H1 (cell line): ENCODE measurements at regions of chr2 and their contacts with region 1.

Region 1: GRCh38 chr2:227890495-227891079 is 19.2 kb downstream of the DAW1 start:
- DNase-seq: no peak
- H3K4me3 ChIP-seq: no peak overlapping the region
- H3K27ac ChIP-seq: no peak overlapping the region
- H3K4me1 ChIP-seq: no peaks in the 10 kb centered on the region
- H3K27me3 ChIP-seq: no peaks in the 10 kb centered on the region
- CTCF ChIP-seq: peak in 2 of 3 experiments; percentile 20 to 24; a peak in 2 of 4 replicates
- EP300 ChIP-seq: no peak
- POLR2A ChIP-seq: no peak
- RAD21 ChIP-seq: peak; percentile 56 to 61

Region 2: DNA sequence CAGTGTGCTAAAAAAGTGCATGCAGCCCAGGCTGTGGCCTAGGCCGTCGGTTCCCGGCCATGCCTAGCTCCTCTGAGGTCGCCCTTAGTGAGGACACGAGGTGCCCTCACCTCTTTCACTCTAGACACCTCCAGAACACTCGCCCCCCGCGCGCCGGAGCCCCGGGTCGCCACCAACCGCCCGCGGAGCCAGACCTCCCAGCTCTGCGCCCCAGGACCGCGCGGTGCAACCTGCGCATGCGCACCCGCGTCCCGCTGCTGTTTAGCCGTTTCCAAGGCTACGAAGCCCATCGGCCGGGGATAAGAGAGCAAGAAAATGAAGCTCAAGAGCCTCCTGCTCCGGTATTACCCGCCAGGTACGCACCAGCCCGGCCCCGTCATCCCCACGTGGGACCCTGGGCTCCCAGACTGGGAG is 19.2 kb before region 1 on chr2 and contains the start of gene DAW1:
- CTCF ChIA-PET with region 1: interaction called, 14 read pairs
- POLR2A ChIA-PET with region 1: no interaction called
- DNase-seq: peak in 1 of 2 experiments; percentile 90
- H3K4me3 ChIP-seq: peak within 1 kb of the TSS; percentile 42 to 59 (median 52)
- H3K27ac ChIP-seq: no peak within 1 kb of the TSS
- H3K4me1 ChIP-seq: peaks cover 0 to 5% (median 3%) of the 10 kb centered on the region in 4 experiments; a peak in 4 of 7 replicates
- H3K27me3 ChIP-seq: no peaks in the 10 kb centered on the region
- CTCF ChIP-seq: no peak
- EP300 ChIP-seq: no peak
- POLR2A ChIP-seq: peak in 1 of 2 experiments; percentile 41; a peak in 2 of 3 replicates
- RAD21 ChIP-seq: no peak
- total RNA-seq, gene DAW1: 0.84 and 1.4 TPM in 2 replicates

Region 3: DNA sequence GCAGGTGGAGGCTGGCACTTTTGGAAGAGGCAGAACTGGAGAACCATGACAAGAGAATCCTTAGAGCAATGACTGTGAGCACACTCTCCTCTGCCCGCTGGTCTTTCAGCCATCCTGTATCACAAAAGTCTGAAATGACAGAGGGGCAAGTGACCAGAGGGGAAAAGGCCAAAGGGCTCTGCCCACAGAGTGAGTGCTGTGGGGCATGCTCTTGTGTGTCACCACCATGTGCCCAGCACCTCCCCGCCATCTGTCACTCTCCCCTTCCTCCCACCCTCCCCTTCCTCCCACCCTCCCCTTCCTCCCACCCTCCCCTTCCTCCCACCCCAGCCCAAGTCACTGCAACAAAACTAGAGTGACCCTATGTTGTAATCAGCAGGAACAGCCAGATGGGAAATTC is 12.8 kb after region 1 on chr2:
- CTCF ChIA-PET with region 1: interaction called, 20 read pairs
- POLR2A ChIA-PET with region 1: no interaction called
- DNase-seq: no peak
- H3K4me3 ChIP-seq: no peak overlapping the region
- H3K27ac ChIP-seq: no peak overlapping the region
- H3K4me1 ChIP-seq: no peaks in the 10 kb centered on the region
- H3K27me3 ChIP-seq: no peaks in the 10 kb centered on the region
- CTCF ChIP-seq: no peak
- EP300 ChIP-seq: no peak
- POLR2A ChIP-seq: no peak
- RAD21 ChIP-seq: no peak